ENCODE measurements at regions of chr9 and their contacts with region 1.

Region 1: GRCh38 chr9:32384364-32385151 is at the start of gene ACO1:
- DNase-seq: peak; percentile 82
- H3K4me3 Mint-ChIP-seq: peak within 1 kb of the TSS; percentile 80
- H3K27ac Mint-ChIP-seq: peak within 1 kb of the TSS; percentile 18
- H3K4me1 Mint-ChIP-seq: peaks cover 19% of the 10 kb centered on the region
- H3K27me3 Mint-ChIP-seq: peaks cover 28% of the 10 kb centered on the region
- total RNA-seq, gene ACO1: 11.1 and 11.8 TPM in 2 replicates

Region 2: GRCh38 chr9:32360983-32361673 is 23.4 kb before region 1 on chr9:
- intact Hi-C with region 1: no loop called
- DNase-seq: no peak
- H3K4me3 Mint-ChIP-seq: no peak overlapping the region
- H3K27ac Mint-ChIP-seq: no peak overlapping the region
- H3K4me1 Mint-ChIP-seq: no peaks in the 10 kb centered on the region
- H3K27me3 Mint-ChIP-seq: peaks cover 2% of the 10 kb centered on the region

Region 3: DNA sequence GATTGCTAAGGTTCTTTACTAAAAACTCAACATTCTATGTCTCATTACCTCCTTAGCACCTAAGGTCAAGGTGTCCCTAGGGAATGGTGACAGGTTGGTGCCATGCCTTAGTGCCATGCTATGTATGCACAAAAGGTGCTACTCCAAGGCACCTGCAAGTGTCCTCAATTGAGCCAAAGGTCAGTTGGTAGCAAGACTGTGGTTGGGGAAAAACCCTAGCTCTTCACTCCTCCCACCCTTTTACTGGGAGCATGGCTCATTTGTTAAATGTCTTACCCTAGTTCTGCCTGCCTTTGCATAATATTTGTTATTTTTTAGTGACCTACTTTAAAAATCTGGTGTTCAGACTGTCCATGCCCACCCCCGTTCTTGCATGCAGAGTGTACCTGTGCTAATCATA is 16.9 kb after region 1 on chr9:
- intact Hi-C with region 1: loop called (anchors 2 kb)
- DNase-seq: no peak
- H3K4me3 Mint-ChIP-seq: no peak overlapping the region
- H3K27ac Mint-ChIP-seq: no peak overlapping the region
- H3K4me1 Mint-ChIP-seq: peaks cover 22% of the 10 kb centered on the region
- H3K27me3 Mint-ChIP-seq: no peaks in the 10 kb centered on the region

Region 4: GRCh38 chr9:32571969-32572899 is 187.7 kb after region 1 on chr9:
- intact Hi-C with region 1: loop called (anchors 1 kb)
- DNase-seq: peak; percentile 64
- H3K4me3 Mint-ChIP-seq: peak overlapping the region; percentile 97
- H3K27ac Mint-ChIP-seq: peak overlapping the region; percentile 97
- H3K4me1 Mint-ChIP-seq: peaks cover 23% of the 10 kb centered on the region
- H3K27me3 Mint-ChIP-seq: peaks cover 4% of the 10 kb centered on the region

Region 5: GRCh38 chr9:32716946-32717543 is 332.5 kb after region 1 on chr9:
- intact Hi-C with region 1: no loop called
- DNase-seq: no peak
- H3K4me3 Mint-ChIP-seq: no peak overlapping the region
- H3K27ac Mint-ChIP-seq: no peak overlapping the region
- H3K4me1 Mint-ChIP-seq: no peaks in the 10 kb centered on the region
- H3K27me3 Mint-ChIP-seq: no peaks in the 10 kb centered on the region